K562 (cell line): ENCODE measurements at regions of chr12 and their contacts with region 1.

Region 1: DNA sequence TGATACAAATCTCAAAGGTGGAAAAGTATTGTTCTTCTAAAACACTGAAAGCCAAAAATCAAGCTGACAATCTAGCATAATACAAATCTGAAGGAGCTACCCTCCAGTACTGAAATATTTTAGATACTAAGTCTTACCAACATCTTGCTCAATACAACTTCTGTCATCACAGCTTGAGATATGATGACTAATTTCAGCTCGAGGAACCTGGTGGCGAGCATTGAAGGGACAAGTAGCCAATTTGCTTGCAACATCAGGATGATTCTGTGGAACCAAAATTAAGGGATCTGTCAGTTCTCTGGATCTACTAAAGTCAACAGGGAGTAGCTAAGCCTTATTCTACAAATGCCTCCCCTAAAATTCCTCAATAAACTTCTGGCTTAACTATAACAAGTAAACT is 10.4 kb downstream of the GTSF1 start:
- DNase-seq: peak in 2 of 4 experiments; percentile 20 to 25
- ATAC-seq: no peak
- H3K4me3 ChIP-seq: no peak overlapping the region
- H3K27ac ChIP-seq: no peak overlapping the region
- H3K4me1 ChIP-seq: no peaks in the 10 kb centered on the region
- H3K27me3 ChIP-seq: no peaks in the 10 kb centered on the region
- CTCF ChIP-seq: no peak
- EP300 ChIP-seq: no peak
- POLR2A ChIP-seq: no peak
- RAD21 ChIP-seq: no peak

Region 2: GRCh38 chr12:54126696-54127537 is 336.1 kb before region 1 on chr12:
- CTCF ChIA-PET with region 1: no interaction called
- POLR2A ChIA-PET with region 1: no interaction called
- in situ Hi-C with region 1: no loop called
- intact Hi-C with region 1: no loop called
- DNase-seq: peak in 1 of 4 experiments; percentile 11
- ATAC-seq: peak; percentile 34; the same call in 1 of the 3 replicates
- H3K4me3 ChIP-seq: no peak overlapping the region
- H3K27ac ChIP-seq: no peak overlapping the region
- H3K4me1 ChIP-seq: peaks cover 0 to 17% of the 10 kb centered on the region in 2 experiments; a peak in 2 of 5 replicates
- H3K27me3 ChIP-seq: peaks cover 18 to 48% of the 10 kb centered on the region in 2 experiments; a peak in 4 of 5 replicates
- CTCF ChIP-seq: no peak
- EP300 ChIP-seq: no peak
- POLR2A ChIP-seq: no peak
- RAD21 ChIP-seq: no peak

Region 3: GRCh38 chr12:54448344-54448743 is 14.7 kb before region 1 on chr12:
- CTCF ChIA-PET with region 1: no interaction called
- POLR2A ChIA-PET with region 1: interaction called, 18 read pairs
- in situ Hi-C with region 1: no loop called
- intact Hi-C with region 1: no loop called
- DNase-seq: no peak
- ATAC-seq: no peak
- H3K4me3 ChIP-seq: no peak overlapping the region
- H3K27ac ChIP-seq: no peak overlapping the region
- H3K4me1 ChIP-seq: peaks cover 0 to 4% of the 10 kb centered on the region in 2 experiments; a peak in 1 of 5 replicates
- H3K27me3 ChIP-seq: no peaks in the 10 kb centered on the region
- CTCF ChIP-seq: no peak
- EP300 ChIP-seq: no peak
- POLR2A ChIP-seq: no peak
- RAD21 ChIP-seq: no peak

Region 4: DNA sequence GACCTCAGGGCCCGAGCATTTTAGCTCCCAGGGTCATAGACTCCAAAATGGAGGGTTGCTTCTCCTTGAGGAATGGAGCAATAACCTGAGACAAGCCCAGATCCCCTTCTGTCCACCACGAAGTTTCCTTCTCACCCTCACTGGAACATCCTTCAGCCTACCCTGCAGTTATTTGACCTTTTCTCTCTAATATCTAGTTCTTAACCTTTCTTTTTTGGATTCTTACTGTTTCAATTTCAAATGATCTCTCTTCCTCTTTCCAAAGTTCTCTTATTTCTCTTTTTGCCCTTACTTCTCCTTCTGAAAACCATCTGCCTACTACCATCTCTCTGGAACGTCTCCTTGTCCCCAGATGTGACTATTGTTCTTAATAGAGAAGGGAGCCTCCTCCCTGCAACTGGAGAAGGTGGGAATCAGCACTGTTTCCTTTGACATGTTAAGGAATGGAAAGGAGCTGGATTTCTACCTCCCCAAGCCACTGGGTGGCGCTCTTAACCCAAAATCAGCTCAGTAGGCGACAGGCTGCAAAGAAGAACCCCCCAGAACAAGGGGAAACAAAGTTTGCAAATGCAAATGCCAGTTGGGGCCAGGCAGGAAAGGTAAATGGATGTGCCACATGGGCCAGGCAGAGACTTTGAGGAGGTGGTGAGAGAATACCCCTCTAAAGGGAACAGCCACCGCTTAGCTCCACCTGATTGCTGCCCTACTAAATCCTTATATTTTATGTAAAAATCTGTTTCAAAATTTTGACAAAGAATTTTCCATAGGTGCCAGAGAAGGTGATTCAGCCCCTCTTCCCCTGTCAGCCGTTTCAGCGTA is 64.0 kb after region 1 on chr12:
- CTCF ChIA-PET with region 1: no interaction called
- POLR2A ChIA-PET with region 1: no interaction called
- in situ Hi-C with region 1: no loop called
- intact Hi-C with region 1: no loop called
- DNase-seq: peak; percentile 59 to 76 (median 72)
- ATAC-seq: peak; percentile 96
- H3K4me3 ChIP-seq: no peak overlapping the region
- H3K27ac ChIP-seq: no peak overlapping the region
- H3K4me1 ChIP-seq: 0 out of 5 replicates have a peak, but pooled peaks cover 0 to under 1% of the 10 kb centered on the region in 2 experiments
- H3K27me3 ChIP-seq: no peaks in the 10 kb centered on the region
- CTCF ChIP-seq: peak; percentile 80 to 91 (median 90)
- EP300 ChIP-seq: no peak
- POLR2A ChIP-seq: no peak
- RAD21 ChIP-seq: peak; percentile 56 to 73